Colonic mucosa (tissue), 4 donors: ENCODE measurements at regions of chr7 and their contacts with region 1.

Region 1: GRCh38 chr7:95871078-95871782 is 98.9 kb downstream of the DYNC1I1 start:
- DNase-seq: no peak
- H3K4me3 ChIP-seq: no peak overlapping the region
- H3K27ac ChIP-seq: no peak overlapping the region
- H3K4me1 ChIP-seq: no peaks in the 10 kb centered on the region
- H3K27me3 ChIP-seq: no peaks in the 10 kb centered on the region
- CTCF ChIP-seq: peak; percentile 21

Region 2: GRCh38 chr7:95169678-95170077 is 701.6 kb before region 1 on chr7:
- intact Hi-C with region 1: no loop called
- DNase-seq: no peak
- H3K4me3 ChIP-seq: no peak overlapping the region
- H3K27ac ChIP-seq: no peak overlapping the region
- H3K4me1 ChIP-seq: no peaks in the 10 kb centered on the region
- H3K27me3 ChIP-seq: no peaks in the 10 kb centered on the region
- CTCF ChIP-seq: no peak

Region 3: GRCh38 chr7:95577137-95577536 is 294.1 kb before region 1 on chr7:
- intact Hi-C with region 1: no loop called
- DNase-seq: no peak
- H3K4me3 ChIP-seq: no peak overlapping the region
- H3K27ac ChIP-seq: no peak overlapping the region
- H3K4me1 ChIP-seq: no peaks in the 10 kb centered on the region
- H3K27me3 ChIP-seq: no peaks in the 10 kb centered on the region
- CTCF ChIP-seq: no peak

Region 4: DNA sequence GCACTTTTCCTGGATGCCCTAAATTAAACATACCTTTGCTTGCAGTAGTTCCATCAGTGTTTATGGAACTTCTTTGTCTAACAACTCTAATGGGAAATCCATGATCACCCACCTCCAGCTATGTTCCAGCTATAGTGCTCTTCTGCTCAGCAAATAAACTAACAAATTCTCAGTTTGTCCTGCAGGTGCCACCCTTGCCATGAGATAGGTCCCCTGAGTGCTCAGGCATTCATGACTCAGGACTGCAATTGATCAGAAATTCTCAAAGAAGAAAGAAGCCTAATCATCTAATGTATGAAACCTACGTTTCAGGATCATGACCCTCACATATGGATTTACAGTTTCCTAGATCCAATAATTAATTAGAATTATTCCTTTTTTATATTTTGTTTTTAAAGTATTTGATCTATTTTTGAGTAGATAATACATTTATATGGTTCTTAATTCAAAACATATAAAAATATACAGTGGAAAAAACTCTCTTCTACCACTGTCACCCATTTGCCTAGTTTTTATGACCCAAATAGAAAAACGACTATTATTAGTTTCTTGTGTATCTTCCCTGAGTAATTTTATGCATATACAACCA is 147.5 kb before region 1 on chr7:
- intact Hi-C with region 1: loop called (anchors 5 kb)
- DNase-seq: no peak
- H3K4me3 ChIP-seq: no peak overlapping the region
- H3K27ac ChIP-seq: no peak overlapping the region
- H3K4me1 ChIP-seq: no peaks in the 10 kb centered on the region
- H3K27me3 ChIP-seq: no peaks in the 10 kb centered on the region
- CTCF ChIP-seq: no peak